K562 (cell line): ENCODE measurements at regions of chrX and their contacts with region 1.

Region 1: DNA sequence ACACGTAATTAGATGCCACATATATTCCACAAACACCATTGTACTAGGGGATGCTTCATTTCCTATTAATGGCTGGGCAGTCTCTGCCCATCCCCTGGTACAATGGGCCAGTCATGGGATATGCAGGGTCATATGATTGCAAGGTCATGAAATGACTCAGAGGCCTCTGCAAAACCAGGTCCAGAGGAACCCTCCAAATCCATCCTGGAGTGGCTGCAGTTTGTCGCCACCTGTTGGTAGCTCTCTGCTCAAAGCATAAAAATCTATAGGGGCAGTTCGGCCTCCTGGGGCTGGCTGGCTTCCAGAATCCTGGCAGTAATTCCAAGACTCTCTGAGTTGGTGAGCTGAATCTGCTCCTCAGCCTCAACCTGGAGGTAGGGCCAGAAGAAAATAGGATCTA is 22.9 kb upstream of the PUDP start:
- DNase-seq: peak; percentile 40 to 64 (median 54)
- ATAC-seq: peak; percentile 83
- H3K4me3 ChIP-seq: no peak overlapping the region
- H3K27ac ChIP-seq: no peak overlapping the region
- H3K4me1 ChIP-seq: no peaks in the 10 kb centered on the region
- H3K27me3 ChIP-seq: no peaks in the 10 kb centered on the region
- CTCF ChIP-seq: peak; percentile 58 to 66 (median 59)
- EP300 ChIP-seq: no peak
- POLR2A ChIP-seq: no peak
- RAD21 ChIP-seq: peak; percentile 21 to 55; a peak in 2 of 4 replicates

Region 2: DNA sequence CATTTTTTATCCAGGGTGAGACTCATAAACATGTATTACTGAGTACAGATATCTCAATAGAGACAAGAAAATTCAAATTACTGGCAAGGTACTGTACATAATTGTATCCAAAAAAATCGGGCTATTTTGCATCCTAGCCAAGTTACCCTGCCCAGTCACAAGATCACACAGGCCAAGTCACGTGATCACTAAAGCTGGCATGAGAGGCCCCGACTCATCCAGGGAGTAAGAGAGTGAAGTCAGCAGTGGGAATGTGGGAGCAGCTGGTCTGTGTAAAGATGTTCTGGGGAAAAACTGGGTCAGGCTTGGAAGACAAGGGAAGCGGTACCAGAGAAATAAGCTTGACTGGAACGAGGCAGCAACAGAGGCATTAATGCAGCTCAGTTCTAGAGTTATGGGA is 142.7 kb before region 1 on chrX:
- CTCF ChIA-PET with region 1: no interaction called
- POLR2A ChIA-PET with region 1: no interaction called
- in situ Hi-C with region 1: no loop called
- intact Hi-C with region 1: no loop called
- DNase-seq: no peak
- ATAC-seq: no peak
- H3K4me3 ChIP-seq: no peak overlapping the region
- H3K27ac ChIP-seq: no peak overlapping the region
- H3K4me1 ChIP-seq: no peaks in the 10 kb centered on the region
- H3K27me3 ChIP-seq: no peaks in the 10 kb centered on the region
- CTCF ChIP-seq: no peak
- EP300 ChIP-seq: no peak
- POLR2A ChIP-seq: no peak
- RAD21 ChIP-seq: no peak

Region 3: DNA sequence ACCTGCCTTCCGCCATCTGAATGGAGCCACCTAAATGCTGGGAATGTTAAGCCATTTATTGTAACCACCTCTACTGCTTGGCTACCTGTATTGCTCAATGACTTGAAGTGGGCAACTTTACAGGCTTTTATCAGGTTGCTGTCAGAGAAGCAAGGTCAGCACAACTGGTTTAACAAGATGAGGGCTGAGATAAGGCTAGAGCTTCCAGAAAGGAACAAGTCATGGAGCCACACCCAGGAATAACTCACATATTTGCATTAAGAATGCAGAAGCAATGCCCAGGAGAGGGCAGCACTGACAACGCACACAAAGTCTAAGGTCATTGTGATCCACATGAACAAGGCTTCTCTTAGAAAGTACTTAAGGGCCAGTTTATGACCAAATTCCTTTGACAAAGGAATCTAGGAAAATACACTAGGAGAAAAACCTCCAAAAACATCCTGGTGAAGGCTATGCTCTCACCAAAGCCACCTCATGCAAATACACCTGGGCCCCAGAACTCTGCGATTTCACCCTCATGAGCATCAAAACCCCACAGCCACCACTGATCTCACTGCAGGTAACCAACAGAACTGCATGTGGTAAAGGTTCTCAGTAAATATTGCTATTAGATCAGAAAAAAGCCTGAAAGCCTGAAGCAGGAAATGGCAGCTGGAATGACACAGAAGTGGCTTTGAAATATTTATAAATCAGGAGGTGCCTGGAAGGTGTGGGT is 38.4 kb before region 1 on chrX:
- CTCF ChIA-PET with region 1: no interaction called
- POLR2A ChIA-PET with region 1: interaction called, 3 read pairs
- in situ Hi-C with region 1: no loop called
- intact Hi-C with region 1: loop called (anchors 1 kb)
- DNase-seq: peak; percentile 54 to 87 (median 64)
- ATAC-seq: peak; percentile 96
- H3K4me3 ChIP-seq: no peak overlapping the region
- H3K27ac ChIP-seq: peak overlapping the region; percentile 81
- H3K4me1 ChIP-seq: peaks cover 13 to 24% of the 10 kb centered on the region in 2 experiments; a peak in 4 of 5 replicates
- H3K27me3 ChIP-seq: no peaks in the 10 kb centered on the region
- CTCF ChIP-seq: peak; percentile 61 to 71 (median 69)
- EP300 ChIP-seq: 0 out of 2 replicates have a peak, but pooled peaks have one; percentile 19
- POLR2A ChIP-seq: no peak
- RAD21 ChIP-seq: peak; percentile 43 to 52